ENCODE measurements at regions of chr1 and their contacts with region 1.

Region 1: DNA sequence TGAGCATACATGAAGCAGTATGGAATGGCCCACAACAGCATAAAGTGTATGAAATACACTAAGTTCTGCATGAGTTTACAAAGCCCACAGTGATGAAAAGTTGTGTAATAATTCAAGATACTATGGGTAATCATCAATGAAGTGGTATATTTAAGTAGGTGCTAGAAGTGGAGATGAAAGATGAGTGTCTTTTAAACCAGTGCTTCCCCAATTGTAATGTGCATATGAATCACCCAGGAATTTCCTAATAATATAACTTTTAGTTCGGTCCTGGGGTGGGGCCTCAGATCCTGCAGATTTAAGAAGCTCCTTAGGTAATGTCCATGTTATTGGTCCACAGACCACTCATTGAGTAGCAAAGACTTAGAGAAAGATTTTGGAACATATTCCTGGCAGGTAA is 184.9 kb downstream of the DUSP10 start:
- DNase-seq: no peak
- H3K4me3 ChIP-seq: no peak overlapping the region
- CTCF ChIP-seq: no peak

Region 2: DNA sequence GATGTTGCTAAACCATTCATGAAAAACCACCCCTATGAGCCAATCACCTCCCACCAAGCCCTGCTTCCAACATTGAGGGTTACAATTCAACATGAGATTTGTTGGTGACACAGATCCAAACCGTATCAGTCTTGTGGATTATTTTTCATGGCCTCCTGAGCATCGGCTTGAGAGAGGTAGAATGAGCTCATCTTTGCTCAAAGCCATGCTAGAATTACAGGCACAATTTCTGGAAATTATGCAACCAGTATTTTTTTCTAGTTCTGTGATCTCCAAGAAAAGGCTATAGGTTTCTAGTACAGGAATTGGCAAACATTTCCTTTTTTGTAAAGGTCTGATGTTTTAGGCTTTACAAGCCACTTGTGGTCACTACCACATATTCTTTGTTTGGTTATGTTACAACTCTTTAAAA is 34.5 kb before region 1 on chr1:
- in situ Hi-C with region 1: loop called (anchors 5 kb)
- DNase-seq: peak; percentile 1
- H3K4me3 ChIP-seq: no peak overlapping the region
- CTCF ChIP-seq: no peak

Region 3: DNA sequence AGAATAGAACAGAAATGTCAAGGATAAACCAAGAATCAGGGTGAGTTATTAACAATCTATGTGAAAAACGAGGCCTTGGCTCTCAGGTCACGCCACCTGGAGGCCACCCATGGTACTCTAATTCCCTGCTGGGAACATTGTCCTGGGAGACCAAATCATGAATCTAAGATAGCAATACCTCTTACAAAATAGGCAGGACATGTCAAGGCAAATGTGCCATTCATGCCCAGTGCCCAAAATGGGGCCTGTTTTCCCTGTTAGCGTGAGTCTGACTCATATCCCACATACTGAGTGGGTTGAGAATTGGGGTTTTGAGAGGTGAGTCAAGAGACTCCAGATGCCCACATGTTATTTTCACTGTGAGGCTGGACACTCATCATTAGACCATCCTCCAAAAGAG is 610.1 kb after region 1 on chr1:
- in situ Hi-C with region 1: loop called (anchors 5 kb)
- DNase-seq: peak; percentile 24
- H3K4me3 ChIP-seq: no peak overlapping the region
- CTCF ChIP-seq: peak; percentile 63